Activated CD4-positive, alpha-beta memory T cell treated with anti-CD3 and anti-CD28 coated beads, Interleukin-2, amount 10 ng/mL, durations not matched to agents 7 days and 5 days (primary cell): ENCODE measurements at regions of chr5 and their contacts with region 1.

Region 1: GRCh38 chr5:43066799-43067741 is 27.0 kb upstream of the ANXA2R start:
- DNase-seq: peak; percentile 90
- H3K4me3 Mint-ChIP-seq: peak overlapping the region; percentile 97
- H3K27ac Mint-ChIP-seq: peak overlapping the region; percentile 100
- H3K4me1 Mint-ChIP-seq: peaks cover 47% of the 10 kb centered on the region
- H3K27me3 Mint-ChIP-seq: no peaks in the 10 kb centered on the region

Region 2: GRCh38 chr5:42950440-42951292 is 116.4 kb before region 1 on chr5:
- CTCF ChIA-PET with region 1: interaction called, 12 read pairs
- POLR2A ChIA-PET with region 1: interaction called, 121 read pairs
- DNase-seq: peak; percentile 77
- H3K4me3 Mint-ChIP-seq: peak overlapping the region; percentile 85
- H3K27ac Mint-ChIP-seq: peak overlapping the region; percentile 100
- H3K4me1 Mint-ChIP-seq: peaks cover 37% of the 10 kb centered on the region
- H3K27me3 Mint-ChIP-seq: no peaks in the 10 kb centered on the region

Region 3: DNA sequence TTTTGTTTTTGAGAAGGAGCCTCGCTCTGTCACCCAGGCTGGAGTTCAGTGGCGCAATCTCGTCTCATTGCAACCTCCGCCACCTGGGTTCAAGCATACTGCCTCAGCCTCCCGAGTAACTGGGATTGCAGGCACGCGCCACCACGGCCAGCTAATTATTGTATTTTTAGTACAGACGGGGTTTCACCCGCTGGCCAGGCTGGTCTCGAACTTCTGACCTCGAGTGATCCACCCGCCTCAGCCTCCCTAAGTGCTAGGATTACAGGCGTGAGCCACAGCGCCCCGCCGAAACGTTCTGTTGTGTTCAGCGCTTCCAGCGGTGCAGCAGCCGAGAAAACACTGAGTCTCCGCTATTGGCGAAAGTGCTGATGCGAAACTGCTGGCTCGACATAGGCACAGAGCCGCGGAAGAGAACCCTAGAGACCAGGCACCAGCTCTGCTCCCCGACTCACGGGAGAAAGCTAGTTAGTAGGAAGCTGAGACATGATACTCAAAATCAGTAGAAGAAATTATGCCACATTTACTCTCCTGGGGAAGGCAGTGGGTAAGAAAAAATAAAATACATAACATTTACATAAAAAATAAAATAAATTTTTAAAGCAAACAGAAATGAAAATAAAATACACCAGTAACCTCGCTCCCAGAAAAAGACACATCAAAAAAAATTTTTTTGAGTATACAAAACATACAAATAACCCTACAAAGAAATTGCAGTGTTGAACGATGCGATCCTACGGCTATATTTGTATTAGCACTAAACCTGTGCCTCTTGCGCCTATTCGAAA is 58.5 kb before region 1 on chr5:
- CTCF ChIA-PET with region 1: interaction called, 14 read pairs
- POLR2A ChIA-PET with region 1: interaction called, 121 read pairs
- DNase-seq: peak; percentile 93
- H3K4me3 Mint-ChIP-seq: peak overlapping the region; percentile 89
- H3K27ac Mint-ChIP-seq: peak overlapping the region; percentile 97
- H3K4me1 Mint-ChIP-seq: peaks cover 39% of the 10 kb centered on the region
- H3K27me3 Mint-ChIP-seq: peaks cover 5% of the 10 kb centered on the region

Region 4: DNA sequence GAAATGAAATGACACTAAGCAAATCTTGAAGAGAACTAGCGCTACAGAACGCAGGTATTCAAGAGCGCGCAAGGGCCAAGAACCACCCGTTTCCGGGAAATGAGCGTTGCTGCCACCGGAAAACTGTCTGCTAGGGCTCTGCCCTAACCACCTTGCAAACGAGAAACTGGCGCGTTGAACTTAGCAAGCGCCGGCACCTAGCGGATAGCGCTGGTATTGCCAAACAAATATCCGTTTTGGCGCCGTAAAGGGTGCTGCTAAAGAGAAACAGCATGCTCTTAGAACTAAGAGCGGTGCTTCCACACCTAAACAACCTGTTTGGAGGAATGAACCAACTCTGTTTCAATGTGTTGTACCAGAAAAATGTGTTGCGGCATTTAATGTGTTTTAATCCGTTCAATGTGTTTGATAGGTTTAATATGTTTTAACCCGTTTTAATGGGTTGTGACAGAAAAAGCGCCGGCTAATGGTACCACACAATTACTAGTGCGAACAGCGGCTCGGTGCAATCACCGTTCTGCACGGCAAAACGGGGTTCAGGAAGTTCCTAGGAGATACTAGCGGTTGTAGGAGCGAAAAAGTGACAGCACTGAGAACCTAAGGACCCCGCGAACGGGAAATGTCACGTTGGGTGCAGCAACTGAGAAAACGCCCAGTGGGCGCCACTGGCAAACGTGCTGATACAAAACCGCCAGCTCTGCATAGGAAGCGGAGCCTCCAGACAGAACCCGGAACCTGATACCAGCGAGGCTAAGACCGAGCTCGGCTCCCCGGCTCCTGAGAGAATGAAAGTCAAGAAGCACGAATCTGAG is 26.6 kb before region 1 on chr5 and contains the start of gene ANXA2R:
- CTCF ChIA-PET with region 1: interaction called, 76 read pairs
- POLR2A ChIA-PET with region 1: interaction called, 312 read pairs
- DNase-seq: peak; percentile 96
- H3K4me3 Mint-ChIP-seq: peak within 1 kb of the TSS; percentile 97
- H3K27ac Mint-ChIP-seq: peak within 1 kb of the TSS; percentile 99
- H3K4me1 Mint-ChIP-seq: peaks cover 42% of the 10 kb centered on the region
- H3K27me3 Mint-ChIP-seq: no peaks in the 10 kb centered on the region
- total RNA-seq, gene ANXA2R: 25.1 to 28.3 TPM

Region 5: GRCh38 chr5:43105369-43106289 is 38.6 kb after region 1 on chr5:
- CTCF ChIA-PET with region 1: interaction called, 15 read pairs
- POLR2A ChIA-PET with region 1: interaction called, 8 read pairs
- DNase-seq: peak; percentile 90
- H3K4me3 Mint-ChIP-seq: peak overlapping the region; percentile 78
- H3K27ac Mint-ChIP-seq: peak overlapping the region; percentile 83
- H3K4me1 Mint-ChIP-seq: peaks cover 45% of the 10 kb centered on the region
- H3K27me3 Mint-ChIP-seq: no peaks in the 10 kb centered on the region

Region 6: DNA sequence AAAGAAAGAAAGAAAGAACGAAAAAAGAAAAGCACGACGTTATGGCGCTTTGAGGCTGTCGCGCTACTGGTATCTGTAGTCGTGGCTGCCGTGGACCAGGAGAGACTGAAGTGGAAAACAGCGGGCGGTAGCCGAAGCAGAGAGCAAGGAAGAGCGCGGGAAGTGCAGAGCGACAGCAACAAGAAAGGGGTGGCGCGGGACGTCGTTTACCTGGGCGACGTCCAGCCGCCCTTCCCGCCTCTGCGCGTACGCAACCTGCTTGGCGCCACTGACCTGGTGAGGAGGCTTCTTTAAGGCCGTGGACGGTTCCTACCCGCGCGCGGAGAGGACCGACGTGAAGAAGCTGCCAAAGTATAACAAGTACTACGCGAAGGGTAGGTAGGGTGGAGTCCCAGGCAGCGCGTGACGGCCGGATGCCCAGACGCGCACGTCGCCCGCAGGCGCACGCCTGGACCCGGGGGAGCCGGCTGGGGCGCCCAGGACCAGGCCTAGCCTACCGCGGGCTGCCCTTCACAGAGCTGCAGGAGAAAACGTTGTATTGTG is 329.8 kb after region 1 on chr5:
- CTCF ChIA-PET with region 1: interaction called, 3 read pairs
- POLR2A ChIA-PET with region 1: interaction called, 10 read pairs
- DNase-seq: peak; percentile 74
- H3K4me3 Mint-ChIP-seq: peak overlapping the region; percentile 99
- H3K27ac Mint-ChIP-seq: peak overlapping the region; percentile 94
- H3K4me1 Mint-ChIP-seq: peaks cover 33% of the 10 kb centered on the region
- H3K27me3 Mint-ChIP-seq: no peaks in the 10 kb centered on the region

Region 7: DNA sequence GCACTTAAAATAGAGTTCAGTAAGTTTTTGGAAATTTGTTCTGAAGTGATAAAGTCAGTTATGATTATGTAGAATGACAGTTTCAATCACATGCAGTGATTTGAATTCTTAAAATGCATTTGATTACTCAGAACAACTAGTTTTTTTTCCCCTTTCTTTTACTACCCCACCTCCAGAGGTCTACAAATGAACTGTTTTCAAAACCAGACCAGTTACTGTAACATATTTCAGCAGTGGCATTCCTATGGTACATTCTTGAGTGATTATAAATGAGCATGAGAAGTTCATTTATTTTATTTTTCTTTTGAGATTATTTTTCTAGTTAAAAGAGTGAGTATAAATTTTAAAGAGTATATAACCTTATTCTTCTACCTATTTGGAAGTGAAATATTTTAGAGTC is 607.5 kb after region 1 on chr5:
- CTCF ChIA-PET with region 1: no interaction called
- POLR2A ChIA-PET with region 1: no interaction called
- DNase-seq: no peak
- H3K4me3 Mint-ChIP-seq: no peak overlapping the region
- H3K27ac Mint-ChIP-seq: no peak overlapping the region
- H3K4me1 Mint-ChIP-seq: peaks cover 6% of the 10 kb centered on the region
- H3K27me3 Mint-ChIP-seq: no peaks in the 10 kb centered on the region